Activated CD4-positive, alpha-beta T cell treated with anti-CD3 and anti-CD28 coated beads for 36 hours (primary cell): ENCODE measurements at regions of chr11 and their contacts with region 1.

Region 1: GRCh38 chr11:1652771-1653540 is 23.4 kb downstream of the KRTAP5-5 start:
- DNase-seq: peak; percentile 86
- ATAC-seq: peak; percentile 91
- H3K4me3 Mint-ChIP-seq: no peak overlapping the region
- H3K27ac Mint-ChIP-seq: no peak overlapping the region
- H3K4me1 Mint-ChIP-seq: no peaks in the 10 kb centered on the region
- H3K27me3 Mint-ChIP-seq: peaks cover 3% of the 10 kb centered on the region

Region 2: DNA sequence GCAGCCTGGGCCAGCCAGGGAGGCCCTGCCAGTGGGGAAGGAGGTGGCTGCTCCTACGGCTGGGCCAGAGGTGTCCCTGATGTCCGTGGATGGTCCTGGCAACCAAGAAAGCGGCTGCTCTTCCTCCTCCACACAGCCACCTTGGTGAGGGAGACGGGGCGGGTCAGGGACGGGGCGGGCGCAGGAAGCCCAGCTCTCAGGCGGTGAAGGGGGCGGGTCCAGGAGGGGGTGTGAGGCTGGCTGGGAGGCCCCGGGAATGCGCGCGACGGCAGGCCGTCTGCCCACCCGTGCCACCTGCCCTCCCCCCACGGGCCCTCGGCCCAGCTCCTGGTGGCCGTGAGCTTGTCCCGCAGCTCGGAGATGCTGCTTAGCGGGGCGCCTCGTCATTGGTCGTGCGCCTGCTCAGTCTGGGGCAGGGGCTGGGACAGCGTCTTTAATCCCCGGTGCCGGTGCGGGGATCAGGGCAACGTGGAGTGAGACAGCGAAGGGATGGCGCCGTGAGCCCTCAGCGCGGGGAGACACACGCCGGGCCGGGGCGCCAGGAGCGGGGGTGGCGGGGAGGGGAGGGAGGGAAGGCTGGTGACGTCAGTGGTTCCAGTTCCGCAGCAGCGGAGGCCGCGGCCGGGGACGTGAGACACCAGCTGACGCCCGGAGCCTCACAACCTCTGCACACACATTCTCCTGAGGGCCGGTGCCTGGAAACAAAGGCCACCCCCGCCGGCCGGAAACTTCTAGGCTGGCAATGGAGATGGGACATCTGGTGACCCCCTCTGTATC is 269.9 kb before region 1 on chr11:
- CTCF ChIA-PET with region 1: no interaction called
- POLR2A ChIA-PET with region 1: no interaction called
- intact Hi-C with region 1: no loop called
- DNase-seq: peak; percentile 92
- ATAC-seq: peak; percentile 82
- H3K4me3 Mint-ChIP-seq: peak overlapping the region; percentile 66
- H3K27ac Mint-ChIP-seq: peak overlapping the region; percentile 83
- H3K4me1 Mint-ChIP-seq: peaks cover 16% of the 10 kb centered on the region
- H3K27me3 Mint-ChIP-seq: no peaks in the 10 kb centered on the region

Region 3: GRCh38 chr11:1679881-1680280 is 26.9 kb after region 1 on chr11:
- CTCF ChIA-PET with region 1: interaction called, 16 read pairs
- POLR2A ChIA-PET with region 1: no interaction called
- intact Hi-C with region 1: no loop called
- DNase-seq: no peak
- ATAC-seq: no peak
- H3K4me3 Mint-ChIP-seq: no peak overlapping the region
- H3K27ac Mint-ChIP-seq: no peak overlapping the region
- H3K4me1 Mint-ChIP-seq: no peaks in the 10 kb centered on the region
- H3K27me3 Mint-ChIP-seq: peaks cover 24% of the 10 kb centered on the region